ENCODE measurements at regions of chr1 and their contacts with region 1.

Region 1: DNA sequence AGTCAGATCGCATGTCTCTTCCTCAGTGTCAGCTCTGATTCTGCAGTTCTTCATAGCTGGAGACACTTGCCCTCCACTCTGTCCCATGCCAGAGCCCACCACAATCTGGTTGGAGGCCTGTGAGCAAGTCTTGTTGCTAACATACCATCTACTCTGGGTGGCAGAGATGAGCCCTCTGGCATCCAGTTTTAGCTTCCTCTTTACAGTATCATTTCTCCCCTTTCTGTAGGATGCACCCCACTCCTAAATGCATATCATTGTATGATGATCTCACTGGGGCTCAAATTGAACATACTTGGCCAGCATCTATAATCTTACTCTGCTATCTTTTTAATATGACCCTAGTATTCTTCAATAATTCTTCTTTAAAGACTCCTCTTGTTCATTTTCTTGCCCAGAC is 16.9 kb downstream of the PCNX2 start:
- DNase-seq: no peak
- H3K27ac ChIP-seq: no peak overlapping the region
- CTCF ChIP-seq: no peak

Region 2: GRCh38 chr1:233081733-233082132 is 196.9 kb before region 1 on chr1:
- CTCF ChIA-PET with region 1: no interaction called
- POLR2A ChIA-PET with region 1: no interaction called
- DNase-seq: no peak
- H3K27ac ChIP-seq: peak overlapping the region; percentile 53; the same call in 1 of the 2 replicates
- CTCF ChIP-seq: no peak

Region 3: GRCh38 chr1:233261206-233261605 is 17.4 kb before region 1 on chr1:
- CTCF ChIA-PET with region 1: no interaction called
- POLR2A ChIA-PET with region 1: no interaction called
- DNase-seq: no peak
- H3K27ac ChIP-seq: no peak overlapping the region
- CTCF ChIP-seq: no peak

Region 4: GRCh38 chr1:234844479-234845031 is 1565.9 kb after region 1 on chr1:
- CTCF ChIA-PET with region 1: interaction called, 10 read pairs
- POLR2A ChIA-PET with region 1: no interaction called
- DNase-seq: no peak
- H3K27ac ChIP-seq: no peak overlapping the region
- CTCF ChIP-seq: no peak